ENCODE measurements at regions of chr3 and their contacts with region 1.

Region 1: GRCh38 chr3:100634493-100635272 is 25.3 kb downstream of the ADGRG7 start:
- DNase-seq: peak; percentile 70 to 87 (median 84)
- H3K4me3 ChIP-seq: peak overlapping the region in 2 of 7 experiments; percentile 17 to 21
- H3K27ac ChIP-seq: no peak overlapping the region
- H3K4me1 ChIP-seq: peaks cover 0 to 23% (median 12%) of the 10 kb centered on the region in 4 experiments
- H3K27me3 ChIP-seq: no peaks in the 10 kb centered on the region

Region 2: GRCh38 chr3:100463002-100463401 is 171.7 kb before region 1 on chr3:
- CTCF ChIA-PET with region 1: interaction called, 11 read pairs
- POLR2A ChIA-PET with region 1: no interaction called
- DNase-seq: peak; percentile 47 to 75 (median 72)
- H3K4me3 ChIP-seq: no peak overlapping the region
- H3K27ac ChIP-seq: no peak overlapping the region
- H3K4me1 ChIP-seq: peaks cover 0 to 1% (median 0%) of the 10 kb centered on the region in 4 experiments
- H3K27me3 ChIP-seq: no peaks in the 10 kb centered on the region

Region 3: GRCh38 chr3:100615684-100616083 is 19.0 kb before region 1 on chr3:
- CTCF ChIA-PET with region 1: interaction called, 4 read pairs
- POLR2A ChIA-PET with region 1: interaction called, 10 read pairs
- DNase-seq: no peak
- H3K4me3 ChIP-seq: no peak overlapping the region
- H3K27ac ChIP-seq: no peak overlapping the region
- H3K4me1 ChIP-seq: peaks cover 0 to 2% (median 0%) of the 10 kb centered on the region in 4 experiments
- H3K27me3 ChIP-seq: no peaks in the 10 kb centered on the region

Region 4: DNA sequence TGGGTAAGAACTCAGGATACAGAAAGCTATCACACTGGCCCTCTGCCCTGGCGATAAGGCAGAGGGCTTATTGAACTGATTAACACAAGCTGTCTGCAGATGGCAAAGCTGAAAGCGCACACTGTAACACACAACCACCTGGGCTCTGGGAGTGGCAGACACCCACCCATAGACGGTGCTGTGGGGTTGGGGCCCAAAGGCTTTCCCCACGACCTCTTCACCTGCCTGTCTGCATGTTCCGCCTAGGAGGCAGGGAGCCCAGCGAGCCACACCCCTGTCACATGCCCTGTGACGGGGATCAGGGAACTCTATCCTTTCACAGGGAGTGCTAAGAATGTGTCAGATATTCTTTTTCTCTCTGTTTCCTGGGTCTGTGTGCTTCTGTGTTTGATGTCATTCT is 62.5 kb after region 1 on chr3:
- CTCF ChIA-PET with region 1: no interaction called
- POLR2A ChIA-PET with region 1: no interaction called
- DNase-seq: no peak
- H3K4me3 ChIP-seq: no peak overlapping the region
- H3K27ac ChIP-seq: no peak overlapping the region
- H3K4me1 ChIP-seq: no peaks in the 10 kb centered on the region
- H3K27me3 ChIP-seq: no peaks in the 10 kb centered on the region